ENCODE measurements at regions of chr1 and their contacts with region 1.

Region 1: DNA sequence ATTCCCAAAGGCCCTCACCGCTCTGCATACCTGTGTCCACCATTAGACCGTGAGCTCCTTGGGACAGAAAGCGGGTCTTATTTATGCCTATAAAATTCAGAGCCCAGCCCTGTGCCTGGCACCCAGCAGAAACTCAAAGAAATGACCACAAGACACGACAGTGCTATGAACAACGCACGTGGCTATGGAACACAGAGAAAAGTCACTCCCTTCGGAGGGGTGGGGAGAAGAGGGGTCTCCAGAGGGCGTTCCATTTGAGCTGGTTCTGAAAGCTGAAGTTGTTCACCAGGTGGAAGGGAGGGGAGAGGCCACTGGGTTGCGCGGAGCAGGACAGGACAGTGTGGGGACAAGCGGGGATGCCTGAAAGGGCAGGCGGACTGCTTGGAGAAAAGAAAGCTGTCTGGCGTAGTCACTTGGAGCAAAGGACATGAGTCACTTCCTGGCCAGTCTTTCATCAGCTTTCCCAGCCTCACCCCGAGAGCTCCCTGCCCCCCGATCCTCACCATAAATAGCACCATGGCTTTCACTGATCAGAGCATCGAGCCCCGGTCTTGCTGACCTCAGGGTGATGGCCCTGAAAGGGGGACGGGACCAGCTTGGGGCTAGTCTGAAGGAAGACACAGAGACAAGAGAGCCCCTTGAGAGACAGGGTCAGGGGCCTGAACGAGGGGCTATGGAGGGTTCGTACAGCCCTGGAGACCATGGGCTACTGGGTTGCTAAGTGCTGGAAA is 28.5 kb downstream of the ECE1 start:
- DNase-seq: no peak
- ATAC-seq: peak; percentile 80
- H3K4me3 ChIP-seq: no peak overlapping the region
- H3K27ac ChIP-seq: peak overlapping the region; percentile 91
- H3K4me1 ChIP-seq: peaks cover 24% of the 10 kb centered on the region
- H3K27me3 ChIP-seq: no peaks in the 10 kb centered on the region
- CTCF ChIP-seq: no peak

Region 2: GRCh38 chr1:21220815-21221214 is 40.9 kb before region 1 on chr1:
- CTCF ChIA-PET with region 1: no interaction called
- POLR2A ChIA-PET with region 1: no interaction called
- in situ Hi-C with region 1: no loop called
- intact Hi-C with region 1: no loop called
- DNase-seq: no peak
- ATAC-seq: no peak
- H3K4me3 ChIP-seq: no peak overlapping the region
- H3K27ac ChIP-seq: no peak overlapping the region
- H3K4me1 ChIP-seq: no peaks in the 10 kb centered on the region
- H3K27me3 ChIP-seq: no peaks in the 10 kb centered on the region
- CTCF ChIP-seq: no peak

Region 3: GRCh38 chr1:21334214-21335087 is 72.7 kb after region 1 on chr1:
- CTCF ChIA-PET with region 1: interaction called, 4 read pairs
- POLR2A ChIA-PET with region 1: interaction called, 12 read pairs
- in situ Hi-C with region 1: no loop called
- intact Hi-C with region 1: no loop called
- DNase-seq: no peak
- ATAC-seq: peak; percentile 87
- H3K4me3 ChIP-seq: peak overlapping the region; percentile 29 to 50
- H3K27ac ChIP-seq: peak overlapping the region; percentile 96
- H3K4me1 ChIP-seq: peaks cover 80% of the 10 kb centered on the region
- H3K27me3 ChIP-seq: no peaks in the 10 kb centered on the region
- CTCF ChIP-seq: peak; percentile 95

Measured in Panc1 (cell line).